CD4-positive, alpha-beta memory T cell (primary cell): ENCODE measurements at regions of chr20 and their contacts with region 1.

Region 1: GRCh38 chr20:17682103-17682888 is at the start of gene RRBP1:
- DNase-seq: peak; percentile 97 to 98 (median 98)
- H3K4me3 ChIP-seq: peak within 1 kb of the TSS; percentile 79 to 81
- H3K4me3 Mint-ChIP-seq: peak within 1 kb of the TSS; percentile 81 to 94 (median 90)
- H3K27ac ChIP-seq: peak within 1 kb of the TSS; percentile 63
- H3K27ac Mint-ChIP-seq: peak within 1 kb of the TSS; percentile 71 to 96 (median 87)
- H3K4me1 ChIP-seq: peaks cover 22% of the 10 kb centered on the region
- H3K4me1 Mint-ChIP-seq: peaks cover 10 to 28% (median 20%) of the 10 kb centered on the region in 4 donors
- H3K27me3 ChIP-seq: peaks cover 3% of the 10 kb centered on the region
- H3K27me3 Mint-ChIP-seq: peaks cover 19 to 24% of the 10 kb centered on the region in 2 donors
- total RNA-seq, gene RRBP1: 28.0 to 33.7 TPM

Region 2: DNA sequence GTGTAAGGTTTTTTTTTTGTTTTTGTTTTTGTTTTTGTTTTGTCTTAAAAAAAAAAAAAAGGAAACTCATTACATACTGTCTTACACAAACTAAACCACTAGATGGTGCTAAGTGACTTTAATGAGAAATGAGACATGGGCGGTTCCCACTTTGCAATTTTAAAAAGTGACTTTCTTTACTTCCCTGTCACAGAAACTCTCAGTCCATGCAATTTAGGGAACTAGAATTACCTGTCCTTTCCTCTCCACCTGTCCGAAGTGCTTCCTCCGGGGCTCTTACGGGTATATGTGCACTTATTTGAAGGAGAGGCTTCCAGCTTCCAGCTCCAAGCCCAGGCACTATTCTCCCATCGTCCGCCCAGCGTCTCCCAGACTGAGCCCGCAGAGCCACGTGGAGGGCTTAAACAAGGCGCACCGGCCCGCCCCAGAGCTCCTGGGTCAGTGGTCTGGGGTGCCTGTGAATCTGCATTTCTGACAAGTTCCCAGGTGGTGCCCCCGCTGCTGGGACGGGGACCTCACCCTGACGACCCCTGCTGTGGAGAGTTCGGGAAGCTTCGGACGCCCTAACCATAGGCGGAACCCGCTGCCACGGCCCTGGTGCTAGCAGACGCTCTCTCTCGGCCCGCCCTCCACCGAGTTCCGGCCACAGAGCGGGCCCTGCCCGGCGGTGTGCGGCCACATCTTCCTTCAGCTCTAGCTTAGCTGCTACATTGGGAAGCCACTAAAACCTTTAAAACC is 177.2 kb before region 1 on chr20:
- CTCF ChIA-PET with region 1: interaction called, 18 read pairs
- POLR2A ChIA-PET with region 1: interaction called, 7 read pairs
- intact Hi-C with region 1: loop called (anchors 1 kb)
- DNase-seq: peak; percentile 57 to 74 (median 69)
- H3K4me3 ChIP-seq: peak overlapping the region; percentile 55 to 63
- H3K4me3 Mint-ChIP-seq: peak overlapping the region; percentile 89 to 97 (median 92)
- H3K27ac ChIP-seq: peak overlapping the region; percentile 54
- H3K27ac Mint-ChIP-seq: peak overlapping the region; percentile 89 to 95 (median 92)
- H3K4me1 ChIP-seq: peaks cover 46% of the 10 kb centered on the region
- H3K4me1 Mint-ChIP-seq: peaks cover 25 to 54% (median 39%) of the 10 kb centered on the region in 4 donors
- H3K27me3 ChIP-seq: no peaks in the 10 kb centered on the region
- H3K27me3 Mint-ChIP-seq: no peaks in the 10 kb centered on the region

Region 3: DNA sequence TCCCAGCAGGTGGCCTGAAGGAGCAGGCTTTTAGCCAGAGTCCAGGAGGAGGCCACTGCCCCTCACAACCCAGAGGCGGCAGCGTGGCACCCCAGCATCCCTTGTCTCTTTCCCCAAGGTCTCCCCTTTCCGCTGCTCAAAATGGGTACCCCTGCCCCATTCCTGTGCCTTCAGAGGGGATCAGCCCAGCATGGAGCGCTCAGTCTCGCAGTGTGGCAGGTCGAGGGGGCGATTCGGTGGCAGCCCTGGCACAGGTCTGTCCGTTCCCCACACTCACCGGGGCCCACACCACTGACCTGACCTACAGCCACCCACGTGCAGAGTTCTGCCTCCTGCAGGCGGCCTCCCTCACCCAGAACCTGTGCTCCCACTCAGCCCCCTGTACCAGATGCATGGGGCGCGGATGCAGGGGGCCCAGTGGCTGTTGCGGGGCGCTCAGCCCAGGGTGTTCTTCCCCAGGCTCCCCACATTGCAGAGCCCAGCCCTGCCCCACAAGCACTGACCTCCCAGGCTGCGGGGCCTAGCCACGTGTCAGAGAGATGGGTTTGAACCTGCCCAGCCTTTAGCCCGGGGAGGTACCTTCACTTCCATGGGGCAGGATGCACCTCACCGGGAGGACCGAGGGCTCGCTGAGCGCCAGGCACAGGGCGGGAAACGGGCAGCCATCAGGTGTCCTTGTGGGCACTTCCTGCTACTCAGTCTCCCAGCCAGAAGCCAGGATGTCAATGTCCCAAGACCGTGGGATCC is 70.6 kb before region 1 on chr20:
- CTCF ChIA-PET with region 1: interaction called, 4 read pairs
- POLR2A ChIA-PET with region 1: interaction called, 11 read pairs
- intact Hi-C with region 1: loop called (anchors 2 kb)
- DNase-seq: peak in 3 of 5 donors; percentile 18 to 39 (median 22)
- H3K4me3 ChIP-seq: peak overlapping the region in 1 of 2 donors; percentile 34
- H3K4me3 Mint-ChIP-seq: peak overlapping the region in 7 of 8 donors; percentile 27 to 98 (median 79)
- H3K27ac ChIP-seq: peak overlapping the region; percentile 57
- H3K27ac Mint-ChIP-seq: peak overlapping the region; percentile 59 to 100 (median 95)
- H3K4me1 ChIP-seq: peaks cover 44% of the 10 kb centered on the region
- H3K4me1 Mint-ChIP-seq: peaks cover 25 to 48% (median 36%) of the 10 kb centered on the region in 4 donors
- H3K27me3 ChIP-seq: no peaks in the 10 kb centered on the region
- H3K27me3 Mint-ChIP-seq: no peaks in the 10 kb centered on the region

Region 4: GRCh38 chr20:17938871-17939619 is 256.7 kb after region 1 on chr20:
- CTCF ChIA-PET with region 1: interaction called, 5 read pairs
- POLR2A ChIA-PET with region 1: no interaction called
- intact Hi-C with region 1: loop called (anchors 1 kb)
- DNase-seq: peak; percentile 33 to 56 (median 48)
- H3K4me3 ChIP-seq: no peak overlapping the region
- H3K4me3 Mint-ChIP-seq: peak overlapping the region in 5 of 8 donors; percentile 20 to 62 (median 47)
- H3K27ac ChIP-seq: no peak overlapping the region
- H3K27ac Mint-ChIP-seq: peak overlapping the region in 4 of 7 donors; percentile 27 to 62 (median 37)
- H3K4me1 ChIP-seq: peaks cover 13% of the 10 kb centered on the region
- H3K4me1 Mint-ChIP-seq: peaks cover 4 to 14% (median 11%) of the 10 kb centered on the region in 4 donors
- H3K27me3 ChIP-seq: no peaks in the 10 kb centered on the region
- H3K27me3 Mint-ChIP-seq: no peaks in the 10 kb centered on the region

Region 5: DNA sequence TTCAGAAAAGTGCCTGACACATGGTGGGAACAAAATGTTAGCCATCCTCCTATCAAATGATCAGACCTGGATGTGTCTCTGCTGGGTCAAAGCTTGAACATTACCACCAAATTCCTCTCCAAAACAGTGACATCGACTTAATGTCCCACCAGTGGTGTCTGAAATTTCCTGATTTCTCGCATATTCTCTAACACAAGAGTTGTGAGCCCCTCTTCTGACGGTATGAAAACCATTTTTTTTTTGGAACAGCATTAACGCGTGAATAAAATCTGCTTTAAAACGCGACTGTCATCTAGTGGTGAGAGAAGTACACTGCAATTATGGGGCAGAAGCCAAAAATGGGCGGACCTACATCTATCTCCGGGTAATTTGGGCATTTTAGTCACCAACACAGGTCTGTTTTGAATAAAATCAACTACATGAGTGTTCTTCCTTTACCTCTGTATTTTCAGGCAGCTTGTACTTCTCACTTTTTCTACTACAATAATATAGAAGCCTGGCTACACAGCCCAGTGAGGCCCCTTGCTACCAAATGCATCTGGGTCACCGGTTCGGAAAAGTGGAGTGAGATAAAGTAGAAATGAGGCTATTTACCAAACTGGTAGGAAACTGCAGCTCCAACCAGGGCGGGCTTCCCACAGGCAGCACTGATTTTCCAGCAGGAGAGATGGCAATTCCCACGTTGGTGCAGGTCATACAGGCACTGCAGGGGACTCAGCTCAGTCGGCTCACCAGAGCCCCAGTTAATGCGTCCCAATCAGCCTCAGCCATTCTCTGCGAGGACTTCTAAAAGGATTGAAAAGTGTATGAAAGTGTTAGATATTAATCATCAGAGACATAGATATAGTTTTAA is 313.9 kb after region 1 on chr20:
- CTCF ChIA-PET with region 1: interaction called, 53 read pairs
- POLR2A ChIA-PET with region 1: interaction called, 3 read pairs
- intact Hi-C with region 1: loop called (anchors 1 kb)
- DNase-seq: peak; percentile 55 to 68 (median 64)
- H3K4me3 ChIP-seq: no peak overlapping the region
- H3K4me3 Mint-ChIP-seq: peak overlapping the region in 1 of 8 donors; percentile 29
- H3K27ac ChIP-seq: no peak overlapping the region
- H3K27ac Mint-ChIP-seq: peak overlapping the region in 1 of 7 donors; percentile 6
- H3K4me1 ChIP-seq: peaks cover 18% of the 10 kb centered on the region
- H3K4me1 Mint-ChIP-seq: peaks cover 13 to 27% (median 19%) of the 10 kb centered on the region in 4 donors
- H3K27me3 ChIP-seq: no peaks in the 10 kb centered on the region
- H3K27me3 Mint-ChIP-seq: peaks cover 0 to 3% of the 10 kb centered on the region in 2 donors

Region 6: DNA sequence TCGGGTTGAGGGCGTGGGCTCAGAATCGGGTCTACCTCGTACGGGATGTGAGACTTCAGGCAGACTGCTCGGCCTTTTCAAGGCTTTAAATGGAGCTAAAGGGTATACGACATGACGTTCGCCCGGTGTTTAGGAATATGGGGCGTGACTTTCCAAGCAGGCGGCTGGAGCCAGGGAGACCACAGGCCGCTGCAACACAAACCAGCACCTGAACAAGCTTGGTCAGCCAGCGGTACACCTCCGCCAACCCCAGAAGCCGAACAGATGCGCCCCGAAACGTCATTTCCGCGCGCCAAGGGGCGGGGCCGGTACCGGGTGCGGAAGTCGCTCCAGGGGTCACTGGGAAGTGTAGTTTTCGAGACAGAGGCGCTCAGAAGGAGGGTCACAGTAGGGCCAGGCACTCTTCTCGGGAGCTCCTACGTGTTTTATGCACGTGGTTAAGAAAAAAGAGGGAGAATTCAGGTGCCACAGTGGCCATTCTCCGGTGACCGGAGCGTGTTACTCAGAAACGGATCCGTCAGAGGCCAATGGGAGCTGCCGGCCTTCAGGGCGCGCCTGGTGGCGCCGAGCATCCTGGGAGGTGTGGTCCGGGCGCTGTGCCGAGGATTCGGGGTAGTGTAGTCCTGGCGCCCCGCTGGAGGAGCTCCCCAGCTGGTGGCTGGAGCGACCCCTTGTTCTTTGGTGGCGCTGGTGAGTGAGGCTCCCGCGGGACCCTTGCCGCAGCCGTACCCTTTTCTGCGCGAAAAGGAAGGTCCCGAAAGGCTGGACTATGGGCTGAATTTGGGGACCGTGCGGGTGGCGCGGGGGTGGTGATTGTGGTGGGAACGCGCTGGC is 605.8 kb after region 1 on chr20 and contains the start of gene ZNF133:
- CTCF ChIA-PET with region 1: interaction called, 7 read pairs
- POLR2A ChIA-PET with region 1: interaction called, 10 read pairs
- intact Hi-C with region 1: loop called (anchors 1 kb)
- DNase-seq: peak; percentile 96 to 99 (median 97)
- H3K4me3 ChIP-seq: peak within 1 kb of the TSS; percentile 87 to 99
- H3K4me3 Mint-ChIP-seq: peak within 1 kb of the TSS; percentile 92 to 99 (median 98)
- H3K27ac ChIP-seq: peak within 1 kb of the TSS; percentile 95
- H3K27ac Mint-ChIP-seq: peak within 1 kb of the TSS; percentile 98 to 100 (median 100)
- H3K4me1 ChIP-seq: peaks cover 19% of the 10 kb centered on the region
- H3K4me1 Mint-ChIP-seq: peaks cover 19 to 34% (median 25%) of the 10 kb centered on the region in 4 donors
- H3K27me3 ChIP-seq: peaks cover 11% of the 10 kb centered on the region
- H3K27me3 Mint-ChIP-seq: peaks cover 11 to 19% of the 10 kb centered on the region in 2 donors
- total RNA-seq, gene ZNF133: 9.1 to 11.8 TPM